ENCODE measurements at regions of chr16 and their contacts with region 1.

Region 1: DNA sequence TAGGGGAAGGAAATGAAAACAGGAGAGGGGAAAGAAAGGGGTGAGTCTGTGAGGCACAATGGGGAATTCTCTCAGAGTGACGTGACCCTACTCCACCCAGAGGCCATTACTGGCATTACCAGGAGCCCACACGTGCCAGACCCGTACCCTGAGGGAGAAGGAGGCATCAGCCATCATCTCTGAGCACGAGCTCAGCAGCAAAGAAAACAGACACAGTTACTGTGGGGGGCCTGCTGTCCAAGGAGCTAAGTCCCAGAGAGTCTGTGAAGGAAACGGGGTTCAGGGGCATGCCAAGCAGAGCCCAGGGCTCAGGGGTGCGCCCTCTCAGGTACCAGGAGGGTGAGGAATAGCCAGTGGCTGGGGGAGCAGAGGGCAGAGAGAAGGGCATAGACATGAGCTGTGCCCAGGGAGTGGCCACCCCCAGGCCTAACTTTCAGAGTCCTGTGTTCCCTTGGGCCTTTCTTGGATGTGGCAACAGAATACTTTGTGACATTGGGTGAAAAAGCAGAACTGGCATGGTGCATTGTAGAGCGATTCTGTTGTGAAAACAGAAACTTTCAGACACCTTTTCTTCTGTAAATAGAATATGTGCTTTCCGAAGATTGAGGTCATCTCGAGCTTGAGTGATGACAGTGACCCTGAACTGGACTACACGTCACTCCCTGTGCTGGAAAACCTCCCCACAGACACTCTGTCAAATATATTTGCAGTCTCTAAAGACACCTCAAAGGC is 11.3 kb downstream of the TAF1C start:
- DNase-seq: peak; percentile 65
- ATAC-seq: peak; percentile 80
- H3K4me3 ChIP-seq: peak overlapping the region in 1 of 3 experiments; percentile 61; a peak in 1 of 6 replicates
- H3K27ac ChIP-seq: no peak overlapping the region
- H3K4me1 ChIP-seq: peaks cover 37% of the 10 kb centered on the region
- H3K27me3 ChIP-seq: peaks cover 1 to 6% of the 10 kb centered on the region in 2 experiments; a peak in 3 of 5 replicates
- CTCF ChIP-seq: peak; percentile 94
- EP300 ChIP-seq: no peak
- POLR2A ChIP-seq: no peak
- RAD21 ChIP-seq: peak; percentile 79

Region 2: GRCh38 chr16:84084570-84085270 is 90.8 kb before region 1 on chr16:
- CTCF ChIA-PET with region 1: interaction called, 23 read pairs
- POLR2A ChIA-PET with region 1: interaction called, 3 read pairs
- in situ Hi-C with region 1: loop called (anchors 5 kb)
- intact Hi-C with region 1: loop called (anchors 1 kb)
- DNase-seq: peak; percentile 78
- ATAC-seq: peak; percentile 96
- H3K4me3 ChIP-seq: no peak overlapping the region
- H3K27ac ChIP-seq: no peak overlapping the region
- H3K4me1 ChIP-seq: no peaks in the 10 kb centered on the region
- H3K27me3 ChIP-seq: no peaks in the 10 kb centered on the region
- CTCF ChIP-seq: peak; percentile 97
- EP300 ChIP-seq: no peak
- POLR2A ChIP-seq: 0 out of 4 replicates have a peak, but pooled peaks of 1 of the 2 experiments have one; percentile 17
- RAD21 ChIP-seq: peak; percentile 89

Region 3: DNA sequence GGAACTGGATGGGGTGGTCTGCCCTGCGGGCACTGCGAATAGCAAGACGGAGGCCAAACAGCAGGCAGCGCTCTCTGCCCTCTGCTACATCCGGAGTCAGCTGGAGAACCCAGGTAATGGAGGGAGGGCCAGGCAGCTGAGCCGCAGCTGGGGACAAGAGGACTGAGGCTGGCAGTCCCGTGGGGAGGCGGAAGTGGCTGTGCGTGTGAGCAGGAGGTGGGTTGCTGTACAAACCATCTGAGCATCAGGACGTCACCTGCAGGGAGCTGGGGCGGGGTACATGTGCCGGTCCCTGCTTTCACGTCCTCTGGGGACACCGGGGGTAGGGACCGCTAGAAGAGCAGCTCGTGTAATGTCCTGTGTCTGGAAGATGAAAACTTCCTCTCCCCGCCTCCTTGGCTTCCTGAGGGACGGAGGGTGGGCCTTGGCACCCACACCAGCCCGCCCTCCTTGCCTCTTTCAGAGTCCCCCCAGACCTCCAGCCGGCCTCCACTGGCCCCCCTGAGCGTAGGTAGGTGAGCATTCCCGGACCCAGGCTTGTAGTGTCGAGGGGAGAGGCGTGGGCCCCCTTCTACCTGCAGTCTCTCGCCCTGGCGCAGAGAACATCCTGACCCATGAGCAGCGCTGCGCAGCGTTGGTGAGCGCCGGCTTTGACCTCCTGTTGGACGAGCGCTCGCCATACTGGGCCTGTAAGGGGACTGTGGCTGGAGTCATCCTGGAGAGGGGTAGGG is 19.1 kb after region 1 on chr16:
- CTCF ChIA-PET with region 1: no interaction called
- POLR2A ChIA-PET with region 1: no interaction called
- in situ Hi-C with region 1: no loop called
- intact Hi-C with region 1: no loop called
- DNase-seq: no peak
- ATAC-seq: no peak
- H3K4me3 ChIP-seq: no peak overlapping the region
- H3K27ac ChIP-seq: no peak overlapping the region
- H3K4me1 ChIP-seq: no peaks in the 10 kb centered on the region
- H3K27me3 ChIP-seq: peaks cover 25 to 69% of the 10 kb centered on the region in 2 experiments; a peak in 4 of 5 replicates
- CTCF ChIP-seq: no peak
- EP300 ChIP-seq: no peak
- POLR2A ChIP-seq: no peak
- RAD21 ChIP-seq: no peak

Region 4: GRCh38 chr16:84390131-84390785 is 214.7 kb after region 1 on chr16:
- CTCF ChIA-PET with region 1: no interaction called
- POLR2A ChIA-PET with region 1: no interaction called
- in situ Hi-C with region 1: no loop called
- intact Hi-C with region 1: no loop called
- DNase-seq: no peak
- ATAC-seq: no peak
- H3K4me3 ChIP-seq: no peak overlapping the region
- H3K27ac ChIP-seq: no peak overlapping the region
- H3K4me1 ChIP-seq: no peaks in the 10 kb centered on the region
- H3K27me3 ChIP-seq: peaks cover 1 to 41% of the 10 kb centered on the region in 2 experiments; a peak in 3 of 5 replicates
- CTCF ChIP-seq: no peak
- EP300 ChIP-seq: no peak
- POLR2A ChIP-seq: no peak
- RAD21 ChIP-seq: no peak

Measured in HepG2 (cell line).